IMR-90 (cell line): ENCODE measurements at regions of chr9 and their contacts with region 1.

Region 1: GRCh38 chr9:134171316-134172197 is 7.2 kb upstream of the RNU6ATAC start:
- DNase-seq: peak; percentile 28
- ATAC-seq: 0 out of 2 replicates have a peak, but pooled peaks have one; percentile 3
- H3K4me3 ChIP-seq: no peak overlapping the region
- H3K27ac ChIP-seq: peak overlapping the region; percentile 69; the same call in 1 of the 2 replicates
- H3K4me1 ChIP-seq: peaks cover 12% of the 10 kb centered on the region
- H3K27me3 ChIP-seq: peaks cover 8% of the 10 kb centered on the region
- CTCF ChIP-seq: no peak
- POLR2A ChIP-seq: no peak
- RAD21 ChIP-seq: no peak

Region 2: GRCh38 chr9:133979273-133979920 is 192.2 kb before region 1 on chr9:
- CTCF ChIA-PET with region 1: no interaction called
- POLR2A ChIA-PET with region 1: no interaction called
- dilution Hi-C with region 1: no loop called
- in situ Hi-C with region 1: no loop called
- intact Hi-C with region 1: no loop called
- DNase-seq: peak; percentile 37
- ATAC-seq: peak; percentile 83
- H3K4me3 ChIP-seq: no peak overlapping the region
- H3K27ac ChIP-seq: no peak overlapping the region
- H3K4me1 ChIP-seq: peaks cover 25% of the 10 kb centered on the region
- H3K27me3 ChIP-seq: no peaks in the 10 kb centered on the region
- CTCF ChIP-seq: no peak
- POLR2A ChIP-seq: no peak
- RAD21 ChIP-seq: no peak

Region 3: DNA sequence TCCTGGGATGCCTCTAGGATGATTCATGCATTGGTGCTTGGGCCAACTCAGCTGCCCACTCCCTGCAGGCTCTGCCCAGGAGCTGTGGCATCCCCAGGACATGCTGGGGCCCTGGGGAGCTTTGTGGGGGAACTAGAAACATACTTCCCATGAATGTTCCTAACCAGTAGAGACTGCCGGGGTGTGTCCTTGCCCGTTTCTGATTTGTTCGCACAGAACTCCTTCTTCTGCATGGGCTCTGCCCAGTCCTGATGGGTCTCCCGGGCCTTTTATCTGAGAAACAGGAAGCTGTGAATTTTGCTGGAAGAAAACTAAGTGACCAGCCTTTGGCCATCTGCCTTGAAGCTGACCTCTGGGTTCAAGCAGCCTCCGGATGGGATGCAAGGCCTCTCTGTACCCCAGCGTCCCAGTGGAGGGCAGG is 64.5 kb after region 1 on chr9:
- CTCF ChIA-PET with region 1: no interaction called
- POLR2A ChIA-PET with region 1: no interaction called
- dilution Hi-C with region 1: no loop called
- in situ Hi-C with region 1: no loop called
- intact Hi-C with region 1: no loop called
- DNase-seq: no peak
- ATAC-seq: peak; percentile 71
- H3K4me3 ChIP-seq: no peak overlapping the region
- H3K27ac ChIP-seq: no peak overlapping the region
- H3K4me1 ChIP-seq: peaks cover 14% of the 10 kb centered on the region
- H3K27me3 ChIP-seq: peaks cover 10% of the 10 kb centered on the region; the same call in 1 of the 2 replicates
- CTCF ChIP-seq: no peak
- POLR2A ChIP-seq: no peak
- RAD21 ChIP-seq: no peak

Region 4: DNA sequence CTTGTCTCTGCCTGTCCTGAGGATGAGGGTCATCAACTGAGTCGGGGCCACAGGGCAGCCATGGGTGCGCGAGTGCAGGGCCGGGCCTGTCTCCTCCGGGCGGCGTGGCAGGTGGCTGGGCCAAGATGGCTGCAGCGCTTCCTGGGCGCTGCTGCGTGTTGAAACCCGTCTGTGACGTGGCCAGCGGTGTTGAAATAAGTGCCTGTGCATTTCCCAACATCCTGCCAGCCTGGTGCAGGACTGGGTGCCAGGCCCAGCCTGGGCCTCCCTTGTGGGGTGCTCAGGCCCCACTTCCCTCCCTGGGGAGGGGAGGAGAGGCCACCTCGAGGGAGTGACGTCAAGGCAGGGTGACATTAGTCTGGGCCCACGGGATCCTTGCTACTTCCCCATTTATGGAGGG is 200.2 kb after region 1 on chr9:
- CTCF ChIA-PET with region 1: no interaction called
- POLR2A ChIA-PET with region 1: no interaction called
- dilution Hi-C with region 1: no loop called
- in situ Hi-C with region 1: no loop called
- intact Hi-C with region 1: no loop called
- DNase-seq: no peak
- ATAC-seq: no peak
- H3K4me3 ChIP-seq: no peak overlapping the region
- H3K27ac ChIP-seq: no peak overlapping the region
- H3K4me1 ChIP-seq: peaks cover 22% of the 10 kb centered on the region
- H3K27me3 ChIP-seq: no peaks in the 10 kb centered on the region
- CTCF ChIP-seq: no peak
- POLR2A ChIP-seq: no peak
- RAD21 ChIP-seq: no peak

Region 5: GRCh38 chr9:134434894-134435506 is 263.4 kb after region 1 on chr9:
- CTCF ChIA-PET with region 1: interaction called, 7 read pairs
- POLR2A ChIA-PET with region 1: no interaction called
- dilution Hi-C with region 1: no loop called
- in situ Hi-C with region 1: loop called (anchors 5 kb)
- intact Hi-C with region 1: loop called (anchors 2 kb)
- DNase-seq: peak; percentile 97
- ATAC-seq: peak; percentile 84
- H3K4me3 ChIP-seq: no peak overlapping the region
- H3K27ac ChIP-seq: peak overlapping the region; percentile 58; the same call in 1 of the 2 replicates
- H3K4me1 ChIP-seq: peaks cover 24% of the 10 kb centered on the region
- H3K27me3 ChIP-seq: no peaks in the 10 kb centered on the region
- CTCF ChIP-seq: no peak
- POLR2A ChIP-seq: no peak
- RAD21 ChIP-seq: peak; percentile 26

Region 6: GRCh38 chr9:134443168-134444037 is 271.8 kb after region 1 on chr9:
- CTCF ChIA-PET with region 1: interaction called, 27 read pairs
- POLR2A ChIA-PET with region 1: no interaction called
- dilution Hi-C with region 1: no loop called
- in situ Hi-C with region 1: loop called (anchors 5 kb)
- intact Hi-C with region 1: loop called (anchors 1 kb)
- DNase-seq: peak; percentile 93
- ATAC-seq: peak; percentile 93
- H3K4me3 ChIP-seq: no peak overlapping the region
- H3K27ac ChIP-seq: no peak overlapping the region
- H3K4me1 ChIP-seq: peaks cover 17% of the 10 kb centered on the region
- H3K27me3 ChIP-seq: no peaks in the 10 kb centered on the region
- CTCF ChIP-seq: peak; percentile 96
- POLR2A ChIP-seq: peak; percentile 50; the same call in 1 of the 2 replicates
- RAD21 ChIP-seq: peak; percentile 99

Region 7: GRCh38 chr9:135221951-135222631 is 1050.5 kb after region 1 on chr9:
- CTCF ChIA-PET with region 1: no interaction called
- POLR2A ChIA-PET with region 1: no interaction called
- dilution Hi-C with region 1: no loop called
- in situ Hi-C with region 1: no loop called
- intact Hi-C with region 1: no loop called
- DNase-seq: no peak
- ATAC-seq: no peak
- H3K4me3 ChIP-seq: no peak overlapping the region
- H3K27ac ChIP-seq: no peak overlapping the region
- H3K4me1 ChIP-seq: no peaks in the 10 kb centered on the region
- H3K27me3 ChIP-seq: no peaks in the 10 kb centered on the region
- CTCF ChIP-seq: no peak
- POLR2A ChIP-seq: no peak
- RAD21 ChIP-seq: no peak